ENCODE measurements at regions of chr16 and their contacts with region 1.

Region 1: GRCh38 chr16:2919511-2920255 is 8.0 kb downstream of the FLYWCH1 start:
- DNase-seq: peak; percentile 94
- H3K4me3 ChIP-seq: peak overlapping the region in 1 of 4 donors; percentile 7
- H3K27ac ChIP-seq: peak overlapping the region; percentile 71 to 76 (median 74)
- H3K4me1 ChIP-seq: peaks cover 7 to 16% (median 14%) of the 10 kb centered on the region in 4 donors
- H3K27me3 ChIP-seq: no peaks in the 10 kb centered on the region
- CTCF ChIP-seq: peak; percentile 98
- EP300 ChIP-seq: no peak
- POLR2A ChIP-seq: no peak

Region 2: DNA sequence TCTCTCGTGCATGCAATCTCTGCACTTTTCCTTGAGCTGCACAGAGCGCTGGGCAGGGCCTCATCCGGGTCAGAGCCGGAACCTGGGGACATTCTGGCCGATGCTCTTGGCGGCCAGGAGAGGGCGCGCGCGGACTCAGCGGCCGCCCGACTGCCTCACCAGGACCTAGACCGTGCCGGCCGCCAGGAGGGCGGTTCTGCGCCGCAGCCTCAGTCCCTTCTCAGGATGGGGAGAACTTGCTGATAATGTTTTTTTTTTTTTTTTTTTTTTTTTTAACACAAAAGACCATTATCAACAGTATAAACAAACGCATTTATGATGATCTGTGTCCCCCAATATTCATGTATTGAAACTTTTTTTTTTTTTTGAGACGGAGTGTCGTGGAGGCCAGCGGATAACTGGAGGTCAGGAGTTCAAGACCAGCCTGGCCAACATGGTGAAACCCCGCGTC is 44.7 kb before region 1 on chr16:
- intact Hi-C with region 1: loop called (anchors 2 kb)
- DNase-seq: no peak
- H3K4me3 ChIP-seq: no peak overlapping the region
- H3K27ac ChIP-seq: no peak overlapping the region
- H3K4me1 ChIP-seq: peaks cover 5 to 8% (median 7%) of the 10 kb centered on the region in 4 donors
- H3K27me3 ChIP-seq: peaks cover 0 to 10% (median 0%) of the 10 kb centered on the region in 4 donors
- CTCF ChIP-seq: peak; percentile 87 to 97 (median 92)
- EP300 ChIP-seq: no peak
- POLR2A ChIP-seq: no peak